ENCODE measurements at regions of chr15 and their contacts with region 1.

Region 1: DNA sequence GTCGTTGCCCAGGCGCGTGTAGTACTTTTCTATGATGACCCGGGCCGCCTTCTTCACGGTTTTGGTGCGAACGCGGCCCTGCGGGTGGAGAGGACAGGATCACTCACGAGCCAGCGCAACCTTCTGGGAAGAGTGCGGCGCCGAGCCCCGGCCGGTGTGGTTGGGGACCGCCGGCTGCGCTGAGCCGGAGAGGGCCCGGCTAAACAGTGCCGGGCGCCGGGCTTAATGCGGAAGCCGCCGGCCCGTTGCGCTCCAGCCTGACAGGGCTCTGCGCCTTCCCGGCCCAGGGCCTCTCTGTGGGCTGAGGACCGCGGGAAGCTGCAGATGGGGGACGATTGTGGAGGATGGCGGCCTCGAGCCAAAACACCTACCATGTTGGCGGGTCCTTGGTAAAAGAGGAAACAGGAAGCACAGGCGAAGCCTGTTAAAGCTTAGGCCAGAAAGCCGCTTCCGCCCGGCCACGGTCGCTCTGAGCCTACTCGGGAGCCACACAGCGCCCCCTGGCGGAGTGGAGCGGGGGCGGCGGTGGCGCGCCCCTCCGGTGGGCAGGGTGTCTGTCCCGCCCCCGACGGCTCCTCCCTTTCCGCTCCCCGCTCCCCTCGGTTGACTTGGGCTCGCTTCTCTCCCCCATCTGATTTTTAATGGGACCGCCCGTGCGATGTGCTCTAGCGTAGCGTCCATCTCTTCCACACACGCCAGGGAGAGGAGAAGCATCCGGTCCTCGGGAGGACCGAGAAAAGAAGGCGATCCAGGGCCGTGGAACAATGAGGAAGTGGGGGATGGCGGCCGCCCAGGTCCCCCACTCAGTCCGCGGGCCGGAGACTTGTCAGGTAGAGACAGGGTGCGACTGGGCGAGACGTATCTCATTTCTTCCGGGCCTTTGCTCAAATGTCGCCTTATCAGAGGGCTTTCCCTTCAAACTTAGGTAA is at the start of gene RPS17:
- DNase-seq: peak; percentile 96 to 100 (median 99)
- ATAC-seq: peak; percentile 98
- H3K4me3 ChIP-seq: peak within 1 kb of the TSS; percentile 84
- H3K4me3 Mint-ChIP-seq: peak within 1 kb of the TSS; percentile 90 to 98 (median 96)
- H3K27ac ChIP-seq: peak within 1 kb of the TSS; percentile 90
- H3K27ac Mint-ChIP-seq: peak within 1 kb of the TSS; percentile 89 to 97 (median 95)
- H3K4me1 ChIP-seq: peaks cover 10 to 18% of the 10 kb centered on the region in 2 donors
- H3K4me1 Mint-ChIP-seq: peaks cover 13 to 43% (median 28%) of the 10 kb centered on the region in 7 donors
- H3K27me3 ChIP-seq: no peaks in the 10 kb centered on the region
- H3K27me3 Mint-ChIP-seq: peaks cover 0 to 4% (median 0%) of the 10 kb centered on the region in 5 donors
- total RNA-seq, gene RPS17: 1,951 to 3,227 (median 2,164) TPM

Region 2: GRCh38 chr15:82020625-82021394 is 519.5 kb before region 1 on chr15:
- CTCF ChIA-PET with region 1: no interaction called
- POLR2A ChIA-PET with region 1: no interaction called
- intact Hi-C with region 1: no loop called
- DNase-seq: no peak
- ATAC-seq: no peak
- H3K4me3 ChIP-seq: no peak overlapping the region
- H3K4me3 Mint-ChIP-seq: no peak overlapping the region
- H3K27ac ChIP-seq: no peak overlapping the region
- H3K27ac Mint-ChIP-seq: no peak overlapping the region
- H3K4me1 ChIP-seq: no peaks in the 10 kb centered on the region
- H3K4me1 Mint-ChIP-seq: no peaks in the 10 kb centered on the region
- H3K27me3 ChIP-seq: no peaks in the 10 kb centered on the region
- H3K27me3 Mint-ChIP-seq: peaks cover 10 to 38% (median 20%) of the 10 kb centered on the region in 5 donors

Region 3: GRCh38 chr15:82262422-82263026 is 277.8 kb before region 1 on chr15 and contains the starts of genes EFL1 and SAXO2:
- CTCF ChIA-PET with region 1: no interaction called
- POLR2A ChIA-PET with region 1: no interaction called
- intact Hi-C with region 1: loop called in 1 of 2 experiments (anchors 1 kb)
- DNase-seq: peak; percentile 83 to 94 (median 88)
- ATAC-seq: peak; percentile 98
- H3K4me3 ChIP-seq: peak within 1 kb of the TSS; percentile 67
- H3K4me3 Mint-ChIP-seq: peak within 1 kb of the TSS; percentile 86 to 99 (median 96)
- H3K27ac ChIP-seq: peak within 1 kb of the TSS; percentile 57
- H3K27ac Mint-ChIP-seq: peak within 1 kb of the TSS; percentile 40 to 92 (median 89)
- H3K4me1 ChIP-seq: peaks cover 8 to 16% of the 10 kb centered on the region in 2 donors
- H3K4me1 Mint-ChIP-seq: peaks cover 22 to 53% (median 34%) of the 10 kb centered on the region in 7 donors
- H3K27me3 ChIP-seq: no peaks in the 10 kb centered on the region
- H3K27me3 Mint-ChIP-seq: peaks cover 0 to 3% (median 0%) of the 10 kb centered on the region in 5 donors
- total RNA-seq, gene EFL1: 9.9 to 27.5 (median 16.6) TPM
- total RNA-seq, gene SAXO2: 1.1 to 6.4 (median 2.5) TPM in 4 of 5 experiments, not detected in the other

Region 4: GRCh38 chr15:82613747-82614146 is 73.4 kb after region 1 on chr15:
- CTCF ChIA-PET with region 1: no interaction called
- POLR2A ChIA-PET with region 1: no interaction called
- intact Hi-C with region 1: no loop called
- DNase-seq: no peak
- ATAC-seq: no peak
- H3K4me3 ChIP-seq: no peak overlapping the region
- H3K4me3 Mint-ChIP-seq: no peak overlapping the region
- H3K27ac ChIP-seq: no peak overlapping the region
- H3K27ac Mint-ChIP-seq: no peak overlapping the region
- H3K4me1 ChIP-seq: no peaks in the 10 kb centered on the region
- H3K4me1 Mint-ChIP-seq: no peaks in the 10 kb centered on the region
- H3K27me3 ChIP-seq: no peaks in the 10 kb centered on the region
- H3K27me3 Mint-ChIP-seq: peaks cover 0 to 15% (median 4%) of the 10 kb centered on the region in 5 donors

Region 5: DNA sequence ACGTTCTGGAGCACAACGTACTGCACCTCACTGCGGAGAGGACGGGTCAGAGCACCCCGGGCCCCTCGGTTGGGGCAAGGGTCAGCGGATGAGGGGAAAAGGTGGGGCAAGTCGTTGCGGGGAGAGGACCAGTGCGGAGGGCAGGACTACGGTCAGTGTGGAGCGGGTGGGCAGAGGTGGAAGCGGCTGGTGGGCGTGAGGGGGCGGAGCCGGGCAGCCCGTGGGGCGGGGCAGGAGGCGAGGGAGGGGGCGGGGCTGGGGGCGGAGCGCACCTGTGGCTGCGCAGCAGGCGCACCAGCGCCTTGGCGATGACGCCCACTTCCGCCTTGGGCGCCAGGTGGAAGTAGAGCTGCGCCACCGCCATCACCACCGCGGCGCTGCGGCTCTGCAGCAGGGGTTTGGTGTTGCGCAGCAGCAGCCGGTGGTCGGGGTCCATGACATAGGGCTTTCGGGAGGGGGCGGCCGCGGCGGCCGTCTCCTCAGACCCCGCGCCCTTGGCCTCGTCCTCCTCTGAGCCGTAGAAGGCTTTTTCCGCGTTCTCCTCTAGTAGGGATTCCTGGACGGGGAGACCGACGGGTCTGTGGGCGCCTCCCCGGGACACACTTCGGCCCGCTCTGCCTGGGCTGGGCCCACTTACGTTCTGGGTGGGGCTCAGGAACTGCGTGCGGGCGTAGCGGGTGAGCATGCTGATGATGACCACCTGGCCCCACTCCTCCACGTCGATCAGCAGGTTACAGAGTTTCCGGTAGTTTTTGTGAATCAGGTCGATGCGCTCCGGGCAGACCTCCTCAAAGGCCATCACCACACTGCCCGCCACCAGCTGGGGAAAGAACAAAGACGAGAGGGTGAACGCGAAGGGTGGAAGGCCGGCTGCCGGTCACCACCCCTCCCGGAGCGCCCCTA is 140.1 kb after region 1 on chr15:
- CTCF ChIA-PET with region 1: no interaction called
- POLR2A ChIA-PET with region 1: interaction called, 21 read pairs
- intact Hi-C with region 1: loop called in 1 of 2 experiments (anchors 1 kb)
- DNase-seq: peak; percentile 47 to 88 (median 82)
- ATAC-seq: peak; percentile 98
- H3K4me3 ChIP-seq: peak overlapping the region; percentile 97
- H3K4me3 Mint-ChIP-seq: peak overlapping the region; percentile 82 to 96 (median 93)
- H3K27ac ChIP-seq: peak overlapping the region; percentile 83
- H3K27ac Mint-ChIP-seq: peak overlapping the region in 8 of 9 donors; percentile 91 to 97 (median 94)
- H3K4me1 ChIP-seq: peaks cover 9% of the 10 kb centered on the region in 2 donors
- H3K4me1 Mint-ChIP-seq: peaks cover 0 to 19% (median 14%) of the 10 kb centered on the region in 7 donors
- H3K27me3 ChIP-seq: no peaks in the 10 kb centered on the region
- H3K27me3 Mint-ChIP-seq: peaks cover 0 to 42% (median 0%) of the 10 kb centered on the region in 5 donors

Region 6: GRCh38 chr15:82749951-82750830 is 209.9 kb after region 1 on chr15:
- CTCF ChIA-PET with region 1: interaction called, 3 read pairs
- POLR2A ChIA-PET with region 1: interaction called, 7 read pairs
- intact Hi-C with region 1: loop called (anchors 1 kb)
- DNase-seq: peak; percentile 51 to 84 (median 70)
- ATAC-seq: peak; percentile 96
- H3K4me3 ChIP-seq: peak overlapping the region; percentile 88
- H3K4me3 Mint-ChIP-seq: peak overlapping the region; percentile 93 to 100 (median 98)
- H3K27ac ChIP-seq: peak overlapping the region; percentile 78
- H3K27ac Mint-ChIP-seq: peak overlapping the region; percentile 89 to 98 (median 95)
- H3K4me1 ChIP-seq: peaks cover 10 to 15% of the 10 kb centered on the region in 2 donors
- H3K4me1 Mint-ChIP-seq: peaks cover 26 to 69% (median 57%) of the 10 kb centered on the region in 7 donors
- H3K27me3 ChIP-seq: no peaks in the 10 kb centered on the region
- H3K27me3 Mint-ChIP-seq: no peaks in the 10 kb centered on the region

Region 7: DNA sequence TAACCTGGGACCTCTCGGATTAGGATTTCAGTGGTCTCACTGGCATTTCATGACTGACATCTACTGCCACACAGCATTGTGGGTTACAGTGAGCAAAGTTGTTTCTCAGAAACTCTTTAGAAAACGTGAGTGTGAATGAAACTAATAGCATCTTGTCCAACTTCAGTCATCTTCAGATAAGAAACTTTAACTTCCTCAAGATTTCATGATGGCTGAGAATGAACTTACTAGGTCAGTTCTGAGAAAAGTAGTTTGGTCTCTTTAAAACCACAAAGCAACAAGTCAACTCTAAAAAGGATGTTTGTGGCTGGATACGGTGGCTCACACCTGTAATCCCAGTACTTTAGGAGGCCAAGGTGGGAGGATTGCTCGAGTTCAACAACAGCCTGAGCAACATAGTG is 426.4 kb after region 1 on chr15:
- CTCF ChIA-PET with region 1: no interaction called
- POLR2A ChIA-PET with region 1: no interaction called
- intact Hi-C with region 1: no loop called
- DNase-seq: peak in 1 of 9 donors; percentile 28
- ATAC-seq: no peak
- H3K4me3 ChIP-seq: no peak overlapping the region
- H3K4me3 Mint-ChIP-seq: peak overlapping the region in 1 of 10 donors; percentile 40
- H3K27ac ChIP-seq: no peak overlapping the region
- H3K27ac Mint-ChIP-seq: peak overlapping the region in 1 of 9 donors; percentile 63
- H3K4me1 ChIP-seq: no peaks in the 10 kb centered on the region
- H3K4me1 Mint-ChIP-seq: peaks cover 0 to 25% (median 0%) of the 10 kb centered on the region in 7 donors
- H3K27me3 ChIP-seq: no peaks in the 10 kb centered on the region
- H3K27me3 Mint-ChIP-seq: peaks cover 0 to 30% (median 0%) of the 10 kb centered on the region in 5 donors

Region 8: GRCh38 chr15:82999905-83000671 is 459.8 kb after region 1 on chr15:
- CTCF ChIA-PET with region 1: interaction called, 7 read pairs
- POLR2A ChIA-PET with region 1: interaction called, 3 read pairs
- intact Hi-C with region 1: loop called in 1 of 2 experiments (anchors 1 kb)
- DNase-seq: peak in 8 of 9 donors; percentile 13 to 68 (median 50)
- ATAC-seq: peak; percentile 94
- H3K4me3 ChIP-seq: peak overlapping the region; percentile 21
- H3K4me3 Mint-ChIP-seq: peak overlapping the region; percentile 59 to 87 (median 81)
- H3K27ac ChIP-seq: peak overlapping the region; percentile 62
- H3K27ac Mint-ChIP-seq: peak overlapping the region; percentile 44 to 92 (median 83)
- H3K4me1 ChIP-seq: peaks cover 3 to 5% of the 10 kb centered on the region in 2 donors
- H3K4me1 Mint-ChIP-seq: peaks cover 0 to 13% (median 9%) of the 10 kb centered on the region in 7 donors
- H3K27me3 ChIP-seq: no peaks in the 10 kb centered on the region
- H3K27me3 Mint-ChIP-seq: no peaks in the 10 kb centered on the region

Region 9: DNA sequence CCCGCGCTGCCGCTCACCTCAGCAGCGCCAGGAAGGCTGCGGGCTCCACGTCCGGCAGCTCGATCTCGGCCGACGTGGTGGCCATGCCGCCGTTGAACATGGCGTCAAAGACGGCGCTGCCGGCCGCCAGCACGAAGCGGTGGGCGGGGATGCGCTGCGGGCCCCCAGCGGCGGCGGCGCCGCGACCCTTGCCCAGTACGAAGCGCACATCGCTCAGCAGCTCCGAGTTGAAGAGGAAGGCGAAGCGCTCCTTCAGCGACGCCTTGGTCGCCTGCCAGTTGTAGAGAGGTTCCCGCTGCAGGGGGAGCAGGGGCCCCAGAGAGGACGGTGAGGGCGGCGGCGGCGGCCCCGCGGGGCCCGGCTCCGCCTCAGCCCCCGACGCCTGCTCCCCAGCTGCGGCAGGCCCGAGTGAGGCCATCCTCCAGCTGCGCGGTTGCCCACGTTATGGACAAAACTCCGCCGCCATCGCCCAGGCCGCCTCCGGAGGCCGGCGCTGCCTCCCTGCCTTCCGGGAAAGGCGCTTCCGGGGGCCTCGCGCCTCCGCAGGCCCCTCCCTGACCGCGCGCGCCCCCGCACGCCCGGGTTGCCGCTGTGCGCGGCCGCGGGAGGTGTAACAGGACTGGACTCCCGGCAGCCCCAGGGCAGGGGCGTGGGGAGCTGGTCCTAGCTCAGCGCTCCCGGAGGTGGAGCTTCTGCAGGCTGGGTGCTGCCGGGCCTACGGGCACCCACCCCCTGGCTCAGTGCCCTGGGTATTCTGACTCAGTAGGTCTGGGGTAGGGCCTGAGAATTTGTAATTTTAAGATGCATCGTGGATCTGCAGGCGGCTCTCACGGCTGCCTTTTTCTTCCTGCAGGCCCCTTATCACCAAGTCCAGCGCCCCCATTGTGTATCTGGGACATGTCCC is 526.7 kb after region 1 on chr15 and contains the start of gene BTBD1:
- CTCF ChIA-PET with region 1: no interaction called
- POLR2A ChIA-PET with region 1: interaction called, 3 read pairs
- intact Hi-C with region 1: loop called (anchors 1 kb)
- DNase-seq: peak; percentile 67 to 93 (median 76)
- ATAC-seq: peak; percentile 88
- H3K4me3 ChIP-seq: peak within 1 kb of the TSS; percentile 87
- H3K4me3 Mint-ChIP-seq: peak within 1 kb of the TSS in 7 of 10 donors; percentile 67 to 89 (median 83)
- H3K27ac ChIP-seq: peak within 1 kb of the TSS; percentile 84
- H3K27ac Mint-ChIP-seq: peak within 1 kb of the TSS; percentile 60 to 91 (median 87)
- H3K4me1 ChIP-seq: peaks cover 32 to 35% of the 10 kb centered on the region in 2 donors
- H3K4me1 Mint-ChIP-seq: peaks cover 8 to 18% (median 11%) of the 10 kb centered on the region in 7 donors
- H3K27me3 ChIP-seq: no peaks in the 10 kb centered on the region
- H3K27me3 Mint-ChIP-seq: peaks cover 0 to 1% (median 0%) of the 10 kb centered on the region in 5 donors
- total RNA-seq, gene BTBD1: 35.0 to 57.6 (median 36.4) TPM